Activated CD4-positive, alpha-beta T cell treated with anti-CD3 and anti-CD28 coated beads for 36 hours (primary cell): ENCODE measurements at regions of chr10 and their contacts with region 1.

Region 1: DNA sequence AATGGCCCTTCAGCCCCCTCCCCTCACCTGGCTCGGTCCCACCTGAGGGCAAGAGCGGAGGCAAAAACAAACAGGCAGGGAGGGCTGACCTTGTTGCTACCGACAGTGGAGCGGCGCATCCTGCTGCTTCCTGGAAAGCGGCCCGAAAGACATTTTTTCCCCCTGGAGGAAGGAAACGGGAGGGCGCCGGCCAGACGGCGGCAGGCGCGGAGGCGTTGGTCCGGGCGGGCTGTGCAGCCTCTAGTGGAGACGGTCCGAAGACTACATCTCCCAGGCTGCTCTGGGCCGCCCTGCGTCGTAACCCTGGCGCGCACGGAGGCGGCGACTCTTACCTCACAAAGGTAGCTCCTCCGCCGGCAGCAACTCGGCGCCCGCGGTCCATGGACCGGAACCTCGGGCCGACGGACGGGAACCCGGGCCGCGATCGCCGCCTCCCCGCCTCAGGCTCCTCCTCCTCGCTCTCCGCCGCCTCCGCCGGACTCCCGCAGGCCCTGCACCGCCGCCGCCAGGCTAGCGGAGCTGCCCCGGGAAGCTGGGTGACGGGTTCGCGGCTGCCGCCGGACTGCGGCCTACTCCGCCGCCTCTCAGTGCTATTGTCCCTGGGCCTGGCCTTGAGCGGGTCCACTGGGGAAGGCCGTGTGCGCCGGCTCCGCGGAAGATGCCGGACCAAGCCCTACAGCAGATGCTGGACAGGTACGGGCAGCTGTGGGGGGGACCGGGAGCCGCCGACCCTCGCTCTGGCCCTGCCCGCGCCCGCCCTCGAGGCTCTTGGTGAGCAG is at the starts of genes CPEB3 and MARCHF5:
- DNase-seq: peak; percentile 97
- ATAC-seq: peak; percentile 98
- H3K4me3 Mint-ChIP-seq: peak within 1 kb of the TSS; percentile 75
- H3K27ac Mint-ChIP-seq: peak within 1 kb of the TSS; percentile 80
- H3K4me1 Mint-ChIP-seq: peaks cover 21% of the 10 kb centered on the region
- H3K27me3 Mint-ChIP-seq: no peaks in the 10 kb centered on the region
- total RNA-seq, gene CPEB3: 1.4 to 1.8 TPM
- total RNA-seq, gene MARCHF5: 11.7 to 25.9 TPM

Region 2: GRCh38 chr10:92087750-92088395 is 203.2 kb before region 1 on chr10:
- CTCF ChIA-PET with region 1: interaction called, 8 read pairs
- POLR2A ChIA-PET with region 1: no interaction called
- intact Hi-C with region 1: loop called (anchors 1 kb)
- DNase-seq: peak; percentile 73
- ATAC-seq: peak; percentile 99
- H3K4me3 Mint-ChIP-seq: no peak overlapping the region
- H3K27ac Mint-ChIP-seq: no peak overlapping the region
- H3K4me1 Mint-ChIP-seq: peaks cover 5% of the 10 kb centered on the region
- H3K27me3 Mint-ChIP-seq: no peaks in the 10 kb centered on the region

Region 3: DNA sequence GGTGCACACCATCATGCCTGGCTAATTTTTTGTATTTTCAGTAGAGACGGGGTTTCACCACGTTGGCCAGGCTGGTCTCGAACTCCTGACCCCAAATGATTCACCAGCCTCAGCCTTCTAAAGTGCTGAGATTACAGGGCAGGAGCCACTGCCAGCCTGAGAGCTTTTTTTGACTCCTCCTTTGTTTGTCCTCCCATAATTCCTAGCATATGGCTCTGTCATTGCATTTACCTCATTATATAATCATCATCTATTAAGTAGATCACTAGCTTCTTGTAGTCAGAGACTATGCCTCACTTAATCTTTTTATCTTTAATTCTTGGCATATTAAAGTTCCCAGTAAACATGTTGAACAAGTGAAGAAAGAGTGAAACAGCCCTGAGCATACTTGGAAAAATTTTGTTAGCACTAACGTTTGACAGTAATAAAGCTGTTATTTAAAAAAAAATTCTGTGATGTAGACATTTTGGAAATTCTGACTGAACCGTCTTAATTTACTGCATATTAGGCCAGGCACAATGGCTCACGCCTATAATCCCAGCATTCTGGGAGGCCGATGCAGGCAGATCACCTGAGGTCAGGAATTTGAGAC is 82.2 kb before region 1 on chr10:
- CTCF ChIA-PET with region 1: no interaction called
- POLR2A ChIA-PET with region 1: interaction called, 3 read pairs
- intact Hi-C with region 1: loop called in 1 of 2 experiments (anchors 1 kb)
- DNase-seq: peak; percentile 8
- ATAC-seq: no peak
- H3K4me3 Mint-ChIP-seq: no peak overlapping the region
- H3K27ac Mint-ChIP-seq: no peak overlapping the region
- H3K4me1 Mint-ChIP-seq: peaks cover 12% of the 10 kb centered on the region
- H3K27me3 Mint-ChIP-seq: no peaks in the 10 kb centered on the region

Region 4: DNA sequence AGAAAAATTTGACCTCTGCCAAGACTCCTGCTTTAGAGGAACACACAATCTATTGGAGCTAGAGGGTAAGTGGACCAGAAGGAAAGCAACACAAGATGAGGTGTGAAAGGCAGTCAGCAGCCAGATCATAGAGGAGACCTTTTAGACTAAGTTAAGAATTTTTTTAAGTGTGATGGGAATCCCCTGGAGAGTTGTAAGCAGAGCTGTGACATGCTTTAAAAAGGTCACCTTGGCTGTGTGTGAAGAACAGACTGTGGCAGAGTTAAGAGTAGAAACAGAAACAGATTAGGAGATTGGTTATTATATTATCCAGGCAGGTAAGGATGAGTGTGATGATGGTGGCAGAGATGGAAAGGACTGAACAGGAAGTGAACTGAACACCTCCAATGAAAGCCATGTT is 23.7 kb before region 1 on chr10:
- CTCF ChIA-PET with region 1: no interaction called
- POLR2A ChIA-PET with region 1: no interaction called
- intact Hi-C with region 1: no loop called
- DNase-seq: no peak
- ATAC-seq: peak; percentile 85
- H3K4me3 Mint-ChIP-seq: no peak overlapping the region
- H3K27ac Mint-ChIP-seq: peak overlapping the region; percentile 10
- H3K4me1 Mint-ChIP-seq: peaks cover 9% of the 10 kb centered on the region
- H3K27me3 Mint-ChIP-seq: no peaks in the 10 kb centered on the region

Region 5: GRCh38 chr10:92303096-92303495 is 12.1 kb after region 1 on chr10:
- CTCF ChIA-PET with region 1: interaction called, 18 read pairs
- POLR2A ChIA-PET with region 1: interaction called, 4 read pairs
- intact Hi-C with region 1: no loop called
- DNase-seq: no peak
- ATAC-seq: peak; percentile 67
- H3K4me3 Mint-ChIP-seq: no peak overlapping the region
- H3K27ac Mint-ChIP-seq: peak overlapping the region; percentile 77
- H3K4me1 Mint-ChIP-seq: peaks cover 41% of the 10 kb centered on the region
- H3K27me3 Mint-ChIP-seq: no peaks in the 10 kb centered on the region